ENCODE measurements at regions of chr21 and their contacts with region 1.

Region 1: GRCh38 chr21:33324291-33325221 is at the start of gene IFNAR1:
- DNase-seq: peak; percentile 98 to 100 (median 99)
- ATAC-seq: peak; percentile 87
- H3K4me3 ChIP-seq: peak within 1 kb of the TSS; percentile 90
- H3K4me3 Mint-ChIP-seq: no peak within 1 kb of the TSS
- H3K27ac ChIP-seq: peak within 1 kb of the TSS; percentile 95 to 99
- H3K27ac Mint-ChIP-seq: no peak within 1 kb of the TSS
- H3K4me1 ChIP-seq: peaks cover 29% of the 10 kb centered on the region
- H3K4me1 Mint-ChIP-seq: peaks cover 31% of the 10 kb centered on the region
- H3K27me3 ChIP-seq: no peaks in the 10 kb centered on the region
- H3K27me3 Mint-ChIP-seq: no peaks in the 10 kb centered on the region
- CTCF ChIP-seq: no peak
- total RNA-seq, gene IFNAR1: 20.4 to 26.8 TPM

Region 2: GRCh38 chr21:33229784-33230544 is 94.6 kb before region 1 on chr21 and contains the start of gene IFNAR2:
- CTCF ChIA-PET with region 1: interaction called, 3 read pairs
- POLR2A ChIA-PET with region 1: interaction called, 32 read pairs
- intact Hi-C with region 1: no loop called
- DNase-seq: peak; percentile 51 to 86 (median 71)
- ATAC-seq: peak; percentile 85
- H3K4me3 ChIP-seq: peak within 1 kb of the TSS; percentile 87
- H3K4me3 Mint-ChIP-seq: peak within 1 kb of the TSS; percentile 96
- H3K27ac ChIP-seq: peak within 1 kb of the TSS; percentile 60 to 87
- H3K27ac Mint-ChIP-seq: peak within 1 kb of the TSS; percentile 90
- H3K4me1 ChIP-seq: peaks cover 24% of the 10 kb centered on the region
- H3K4me1 Mint-ChIP-seq: peaks cover 48% of the 10 kb centered on the region
- H3K27me3 ChIP-seq: no peaks in the 10 kb centered on the region
- H3K27me3 Mint-ChIP-seq: no peaks in the 10 kb centered on the region
- CTCF ChIP-seq: no peak
- total RNA-seq, gene IFNAR2: 26.6 to 28.2 TPM

Region 3: DNA sequence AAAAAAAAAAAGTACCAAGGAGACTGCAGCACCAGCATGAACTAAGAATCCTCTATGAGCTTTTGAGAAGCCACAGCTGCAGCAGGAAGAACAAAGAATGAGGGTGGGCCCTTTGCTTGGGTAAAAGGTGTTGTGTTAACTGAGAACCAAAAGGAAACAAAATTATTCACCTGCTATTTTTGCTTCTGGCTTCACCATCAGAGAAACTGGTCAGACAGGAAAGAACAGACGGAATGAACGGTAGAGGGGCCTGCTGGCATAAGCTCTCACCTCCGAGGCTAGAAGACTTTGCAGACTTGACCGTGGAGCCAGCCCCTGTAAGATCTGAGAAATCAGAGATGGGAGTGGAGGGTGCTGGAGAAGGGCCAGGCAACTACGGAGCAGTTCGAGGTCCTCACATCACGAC is 30.7 kb before region 1 on chr21:
- CTCF ChIA-PET with region 1: no interaction called
- POLR2A ChIA-PET with region 1: interaction called, 35 read pairs
- intact Hi-C with region 1: no loop called
- DNase-seq: peak in 6 of 14 experiments; percentile 9 to 50 (median 25)
- ATAC-seq: peak; percentile 92
- H3K4me3 ChIP-seq: no peak overlapping the region
- H3K4me3 Mint-ChIP-seq: peak overlapping the region; percentile 74
- H3K27ac ChIP-seq: peak overlapping the region in 1 of 2 donors; percentile 30
- H3K27ac Mint-ChIP-seq: peak overlapping the region; percentile 86
- H3K4me1 ChIP-seq: peaks cover 21% of the 10 kb centered on the region
- H3K4me1 Mint-ChIP-seq: peaks cover 44% of the 10 kb centered on the region
- H3K27me3 ChIP-seq: no peaks in the 10 kb centered on the region
- H3K27me3 Mint-ChIP-seq: no peaks in the 10 kb centered on the region
- CTCF ChIP-seq: no peak

Region 4: DNA sequence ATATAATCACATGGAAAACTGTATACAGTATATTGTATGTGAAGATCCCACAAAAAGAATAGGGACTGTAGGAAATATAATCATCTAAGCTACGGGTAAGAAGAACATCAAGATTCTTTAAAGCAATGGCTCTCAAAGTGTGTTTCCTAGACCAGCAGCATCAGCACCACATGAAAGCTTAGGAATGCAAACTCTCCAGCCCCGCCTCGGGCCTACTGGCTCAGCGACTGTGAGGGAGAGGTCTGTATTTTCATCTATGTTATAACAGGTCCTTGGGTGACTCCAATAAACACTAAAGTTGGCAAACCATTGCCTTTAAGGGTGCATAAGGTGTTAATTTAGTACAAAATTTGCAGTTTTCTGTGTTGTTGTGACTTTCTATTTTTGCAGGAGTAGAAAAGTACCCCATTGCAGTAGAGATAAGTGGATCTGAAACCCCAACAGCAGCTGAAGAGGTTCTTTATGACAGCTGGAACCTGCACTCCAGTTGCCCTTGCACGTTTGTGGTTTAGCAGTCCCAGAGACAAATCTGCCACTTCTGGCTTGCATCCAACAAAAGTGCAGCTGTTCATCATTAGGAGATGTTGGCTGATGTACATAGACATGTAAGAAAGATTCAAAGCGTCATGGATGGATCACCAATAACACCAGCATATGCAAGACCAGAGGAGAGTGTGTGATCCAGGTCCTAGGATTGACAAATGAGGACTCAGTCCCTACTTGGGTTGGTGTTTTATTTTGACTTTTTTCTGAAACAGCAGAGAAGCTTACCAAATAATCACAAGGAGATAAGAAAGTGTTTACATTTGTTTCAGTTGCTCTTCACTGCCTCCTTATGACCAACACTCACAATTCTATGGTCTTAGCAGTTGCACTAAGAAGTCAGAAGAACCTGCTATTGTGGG is 15.7 kb before region 1 on chr21:
- CTCF ChIA-PET with region 1: no interaction called
- POLR2A ChIA-PET with region 1: interaction called, 15 read pairs
- intact Hi-C with region 1: no loop called
- DNase-seq: peak in 9 of 14 experiments; percentile 10 to 67 (median 39)
- ATAC-seq: peak; percentile 73
- H3K4me3 ChIP-seq: no peak overlapping the region
- H3K4me3 Mint-ChIP-seq: no peak overlapping the region
- H3K27ac ChIP-seq: no peak overlapping the region
- H3K27ac Mint-ChIP-seq: peak overlapping the region; percentile 17
- H3K4me1 ChIP-seq: peaks cover 10% of the 10 kb centered on the region
- H3K4me1 Mint-ChIP-seq: peaks cover 38% of the 10 kb centered on the region
- H3K27me3 ChIP-seq: no peaks in the 10 kb centered on the region
- H3K27me3 Mint-ChIP-seq: no peaks in the 10 kb centered on the region
- CTCF ChIP-seq: no peak

Region 5: GRCh38 chr21:33386222-33386784 is 61.7 kb after region 1 on chr21:
- CTCF ChIA-PET with region 1: no interaction called
- POLR2A ChIA-PET with region 1: interaction called, 13 read pairs
- intact Hi-C with region 1: no loop called
- DNase-seq: no peak
- ATAC-seq: no peak
- H3K4me3 ChIP-seq: no peak overlapping the region
- H3K4me3 Mint-ChIP-seq: no peak overlapping the region
- H3K27ac ChIP-seq: no peak overlapping the region
- H3K27ac Mint-ChIP-seq: no peak overlapping the region
- H3K4me1 ChIP-seq: peaks cover 45% of the 10 kb centered on the region
- H3K4me1 Mint-ChIP-seq: peaks cover 44% of the 10 kb centered on the region
- H3K27me3 ChIP-seq: no peaks in the 10 kb centered on the region
- H3K27me3 Mint-ChIP-seq: no peaks in the 10 kb centered on the region
- CTCF ChIP-seq: no peak

Region 6: DNA sequence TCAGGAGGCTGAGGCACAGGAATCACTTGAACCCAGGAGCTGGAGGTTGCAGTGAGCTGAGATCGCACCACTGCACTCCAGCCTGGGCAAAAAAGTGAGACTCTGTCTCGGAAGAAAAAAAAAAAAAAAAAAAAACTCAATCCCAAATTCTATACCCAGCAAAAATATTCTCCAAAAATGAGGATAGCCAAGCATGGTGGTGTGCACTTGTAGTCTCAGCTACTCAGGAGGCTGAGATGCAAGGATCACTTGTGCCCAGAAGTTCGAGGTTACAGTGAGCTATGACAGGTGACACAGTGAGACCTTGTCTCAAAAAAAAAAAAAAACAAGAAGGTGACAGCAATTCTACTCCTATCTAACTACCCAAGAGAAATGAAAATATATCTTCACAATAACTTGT is 148.8 kb after region 1 on chr21:
- CTCF ChIA-PET with region 1: no interaction called
- POLR2A ChIA-PET with region 1: no interaction called
- intact Hi-C with region 1: no loop called
- DNase-seq: no peak
- ATAC-seq: no peak
- H3K4me3 ChIP-seq: no peak overlapping the region
- H3K4me3 Mint-ChIP-seq: no peak overlapping the region
- H3K27ac ChIP-seq: no peak overlapping the region
- H3K27ac Mint-ChIP-seq: no peak overlapping the region
- H3K4me1 ChIP-seq: peaks cover 10% of the 10 kb centered on the region
- H3K4me1 Mint-ChIP-seq: peaks cover 24% of the 10 kb centered on the region
- H3K27me3 ChIP-seq: no peaks in the 10 kb centered on the region
- H3K27me3 Mint-ChIP-seq: no peaks in the 10 kb centered on the region
- CTCF ChIP-seq: no peak